Activated B cell treated with CpG ODN at 0.5 μM for 24 hours (primary cell): ENCODE measurements at regions of chr20 and their contacts with region 1.

Region 1: GRCh38 chr20:54199721-54200176 is 8.1 kb upstream of the PFDN4 start:
- DNase-seq: peak; percentile 61
- ATAC-seq: peak; percentile 66
- H3K4me3 Mint-ChIP-seq: no peak overlapping the region
- H3K27ac Mint-ChIP-seq: no peak overlapping the region
- H3K4me1 Mint-ChIP-seq: peaks cover 6% of the 10 kb centered on the region
- H3K27me3 Mint-ChIP-seq: peaks cover 2% of the 10 kb centered on the region
- CTCF ChIP-seq: peak; percentile 83

Region 2: GRCh38 chr20:52242237-52243230 is 1957.2 kb before region 1 on chr20:
- CTCF ChIA-PET with region 1: no interaction called
- POLR2A ChIA-PET with region 1: no interaction called
- intact Hi-C with region 1: loop called (anchors 1 kb)
- DNase-seq: no peak
- ATAC-seq: no peak
- H3K4me3 Mint-ChIP-seq: no peak overlapping the region
- H3K27ac Mint-ChIP-seq: no peak overlapping the region
- H3K4me1 Mint-ChIP-seq: no peaks in the 10 kb centered on the region
- H3K27me3 Mint-ChIP-seq: peaks cover 10% of the 10 kb centered on the region
- CTCF ChIP-seq: peak; percentile 73

Region 3: GRCh38 chr20:53157443-53158408 is 1042.0 kb before region 1 on chr20:
- CTCF ChIA-PET with region 1: no interaction called
- POLR2A ChIA-PET with region 1: no interaction called
- intact Hi-C with region 1: loop called (anchors 2 kb)
- DNase-seq: peak; percentile 24
- ATAC-seq: peak; percentile 53
- H3K4me3 Mint-ChIP-seq: peak overlapping the region; percentile 36
- H3K27ac Mint-ChIP-seq: peak overlapping the region; percentile 86
- H3K4me1 Mint-ChIP-seq: peaks cover 43% of the 10 kb centered on the region
- H3K27me3 Mint-ChIP-seq: no peaks in the 10 kb centered on the region
- CTCF ChIP-seq: no peak

Region 4: DNA sequence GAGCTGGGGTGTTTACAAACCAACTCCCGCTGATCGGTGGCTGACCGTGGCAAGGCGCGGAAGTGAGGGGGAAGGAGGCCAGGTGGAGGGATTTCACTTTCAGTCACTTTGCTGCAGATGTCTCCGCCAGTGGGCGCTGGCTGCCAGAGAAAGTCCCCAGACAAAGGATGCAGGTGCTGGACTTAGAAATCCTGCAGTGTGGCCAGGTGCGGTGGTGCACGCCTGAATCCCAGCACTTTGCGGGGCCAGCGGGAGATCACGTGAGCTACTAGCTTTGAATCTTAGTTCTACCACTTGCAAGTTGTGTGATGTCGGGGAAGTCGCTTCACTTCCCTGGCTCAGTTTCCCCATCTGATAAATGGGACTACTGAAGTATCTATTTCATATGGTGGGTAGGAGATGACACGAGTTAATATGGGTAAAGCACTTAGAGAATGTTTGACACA is 786.5 kb before region 1 on chr20:
- CTCF ChIA-PET with region 1: interaction called, 6 read pairs
- POLR2A ChIA-PET with region 1: no interaction called
- intact Hi-C with region 1: loop called (anchors 1 kb)
- DNase-seq: peak; percentile 43
- ATAC-seq: peak; percentile 70
- H3K4me3 Mint-ChIP-seq: peak overlapping the region; percentile 58
- H3K27ac Mint-ChIP-seq: no peak overlapping the region
- H3K4me1 Mint-ChIP-seq: peaks cover 6% of the 10 kb centered on the region
- H3K27me3 Mint-ChIP-seq: peaks cover 2% of the 10 kb centered on the region
- CTCF ChIP-seq: no peak

Region 5: DNA sequence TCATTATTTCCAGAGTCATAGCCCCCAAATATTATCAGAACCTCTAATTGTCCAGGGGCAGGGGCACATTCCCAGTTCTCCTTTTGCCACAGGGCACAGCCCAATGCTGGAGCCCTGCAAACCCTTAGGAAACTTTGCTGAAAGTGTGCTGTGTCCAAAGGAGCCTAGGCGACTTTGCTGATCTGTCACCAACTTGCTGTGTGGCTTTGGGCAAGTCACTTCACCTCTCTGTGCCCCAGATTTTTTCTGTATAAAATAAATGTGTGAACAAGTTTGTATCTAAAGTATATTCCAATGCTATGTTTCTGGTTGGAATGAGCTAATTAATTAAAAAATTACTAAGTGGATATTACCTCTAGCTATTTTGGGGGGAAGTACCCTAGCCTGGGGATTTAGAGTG is 103.9 kb before region 1 on chr20:
- CTCF ChIA-PET with region 1: interaction called, 8 read pairs
- POLR2A ChIA-PET with region 1: interaction called, 7 read pairs
- intact Hi-C with region 1: loop called (anchors 1 kb)
- DNase-seq: no peak
- ATAC-seq: no peak
- H3K4me3 Mint-ChIP-seq: no peak overlapping the region
- H3K27ac Mint-ChIP-seq: no peak overlapping the region
- H3K4me1 Mint-ChIP-seq: peaks cover 1% of the 10 kb centered on the region
- H3K27me3 Mint-ChIP-seq: peaks cover 2% of the 10 kb centered on the region
- CTCF ChIP-seq: no peak